Activated B cell treated with CpG ODN at 0.5 μM for 24 hours (primary cell): ENCODE measurements at regions of chr12 and their contacts with region 1.

Region 1: DNA sequence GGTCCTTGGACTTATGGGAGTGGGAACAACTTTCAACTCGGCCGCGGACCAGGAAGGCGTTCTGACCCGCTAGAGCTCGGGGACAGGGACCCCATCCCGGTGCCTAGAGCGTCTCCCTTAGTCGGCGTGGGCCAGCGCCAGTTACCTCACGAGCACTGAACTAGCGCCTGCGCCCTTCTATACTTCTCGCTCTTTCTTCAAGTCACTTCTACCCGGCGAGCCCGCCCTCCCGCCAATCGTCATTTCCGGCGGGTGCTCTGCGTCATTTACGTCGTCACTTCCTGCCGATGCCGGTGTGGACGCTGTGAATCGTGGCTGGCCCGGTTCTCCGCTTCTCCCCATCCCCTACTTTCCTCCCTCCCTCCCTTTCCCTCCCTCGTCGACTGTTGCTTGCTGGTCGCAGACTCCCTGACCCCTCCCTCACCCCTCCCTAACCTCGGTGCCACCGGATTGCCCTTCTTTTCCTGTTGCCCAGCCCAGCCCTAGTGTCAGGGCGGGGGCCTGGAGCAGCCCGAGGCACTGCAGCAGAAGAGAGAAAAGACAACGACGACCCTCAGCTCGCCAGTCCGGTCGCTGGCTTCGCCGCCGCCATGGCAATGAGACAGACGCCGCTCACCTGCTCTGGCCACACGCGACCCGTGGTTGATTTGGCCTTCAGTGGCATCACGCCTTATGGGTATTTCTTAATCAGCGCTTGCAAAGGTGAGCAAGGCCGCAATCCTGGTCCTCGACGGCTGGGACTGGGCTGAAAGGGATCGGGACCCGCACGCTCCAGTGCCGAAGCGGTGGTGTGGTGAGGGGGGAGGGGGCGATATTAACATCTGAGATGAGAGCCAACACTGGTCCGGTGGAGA is at the start of gene STRAP:
- DNase-seq: peak; percentile 95
- ATAC-seq: peak; percentile 94
- H3K4me3 Mint-ChIP-seq: peak within 1 kb of the TSS; percentile 99
- H3K27ac Mint-ChIP-seq: peak within 1 kb of the TSS; percentile 99
- H3K4me1 Mint-ChIP-seq: peaks cover 53% of the 10 kb centered on the region
- H3K27me3 Mint-ChIP-seq: no peaks in the 10 kb centered on the region
- CTCF ChIP-seq: no peak
- total RNA-seq, gene STRAP: 78.1 and 82.3 TPM in 2 replicates

Region 2: DNA sequence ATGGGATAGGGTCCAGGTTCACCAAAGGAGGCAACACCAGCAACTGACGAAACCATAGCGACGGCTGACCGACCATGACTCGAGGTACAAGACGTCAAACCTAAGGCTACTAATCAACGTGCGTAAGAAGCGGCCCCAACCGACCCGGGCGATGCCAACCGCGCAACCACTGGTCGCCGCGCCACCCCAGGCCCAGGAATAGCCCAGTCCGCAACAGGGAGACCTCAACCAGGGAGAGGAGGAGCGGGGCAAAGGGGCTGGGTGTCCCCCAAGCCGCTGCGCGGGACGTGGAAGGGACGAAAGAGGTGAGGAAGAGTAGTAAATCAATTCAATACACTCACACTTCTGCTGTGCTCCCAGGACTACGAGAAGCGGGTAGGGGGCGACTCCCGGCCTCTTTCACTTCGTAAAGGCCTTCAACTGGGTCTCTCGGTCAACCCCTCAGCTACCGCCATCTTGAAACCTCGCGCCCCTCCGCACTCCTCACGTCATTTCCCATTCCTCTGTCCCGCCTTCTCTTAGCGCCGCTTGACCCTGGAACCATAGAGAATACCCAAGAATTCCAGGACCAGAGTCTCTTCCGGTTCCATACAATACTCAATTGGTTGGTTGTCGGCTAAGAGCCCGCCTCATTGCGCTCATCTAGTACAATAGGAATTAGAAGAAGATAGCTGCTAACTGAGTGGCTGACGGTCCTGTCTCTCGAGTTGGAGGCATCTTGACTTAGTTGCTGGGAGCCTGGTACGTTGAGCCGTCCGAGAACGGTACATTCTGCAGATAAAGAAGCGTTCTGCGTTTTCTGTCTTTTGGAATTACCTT is 1079.1 kb before region 1 on chr12 and contains the starts of genes C12orf60 and WBP11:
- CTCF ChIA-PET with region 1: no interaction called
- POLR2A ChIA-PET with region 1: no interaction called
- intact Hi-C with region 1: loop called (anchors 1 kb)
- DNase-seq: peak; percentile 74
- ATAC-seq: peak; percentile 95
- H3K4me3 Mint-ChIP-seq: no peak within 1 kb of the TSS
- H3K27ac Mint-ChIP-seq: no peak within 1 kb of the TSS
- H3K4me1 Mint-ChIP-seq: peaks cover 17% of the 10 kb centered on the region
- H3K27me3 Mint-ChIP-seq: no peaks in the 10 kb centered on the region
- CTCF ChIP-seq: no peak
- total RNA-seq, gene C12orf60: 0.64 and 0.69 TPM in 2 replicates
- total RNA-seq, gene WBP11: 86.3 and 89.4 TPM in 2 replicates

Region 3: GRCh38 chr12:15546102-15546701 is 336.1 kb before region 1 on chr12:
- CTCF ChIA-PET with region 1: no interaction called
- POLR2A ChIA-PET with region 1: interaction called, 7 read pairs
- intact Hi-C with region 1: loop called (anchors 5 kb)
- DNase-seq: no peak
- ATAC-seq: peak; percentile 76
- H3K4me3 Mint-ChIP-seq: peak overlapping the region; percentile 87
- H3K27ac Mint-ChIP-seq: peak overlapping the region; percentile 99
- H3K4me1 Mint-ChIP-seq: peaks cover 60% of the 10 kb centered on the region
- H3K27me3 Mint-ChIP-seq: no peaks in the 10 kb centered on the region
- CTCF ChIP-seq: no peak

Region 4: GRCh38 chr12:15789220-15790171 is 92.8 kb before region 1 on chr12 and contains the start of gene EPS8:
- CTCF ChIA-PET with region 1: no interaction called
- POLR2A ChIA-PET with region 1: no interaction called
- intact Hi-C with region 1: loop called (anchors 2 kb)
- DNase-seq: peak; percentile 91
- ATAC-seq: peak; percentile 96
- H3K4me3 Mint-ChIP-seq: peak within 1 kb of the TSS; percentile 91
- H3K27ac Mint-ChIP-seq: peak within 1 kb of the TSS; percentile 46
- H3K4me1 Mint-ChIP-seq: peaks cover 14% of the 10 kb centered on the region
- H3K27me3 Mint-ChIP-seq: peaks cover 47% of the 10 kb centered on the region
- CTCF ChIP-seq: no peak
- total RNA-seq, gene EPS8: 0.73 and 0.89 TPM in 2 replicates

Region 5: DNA sequence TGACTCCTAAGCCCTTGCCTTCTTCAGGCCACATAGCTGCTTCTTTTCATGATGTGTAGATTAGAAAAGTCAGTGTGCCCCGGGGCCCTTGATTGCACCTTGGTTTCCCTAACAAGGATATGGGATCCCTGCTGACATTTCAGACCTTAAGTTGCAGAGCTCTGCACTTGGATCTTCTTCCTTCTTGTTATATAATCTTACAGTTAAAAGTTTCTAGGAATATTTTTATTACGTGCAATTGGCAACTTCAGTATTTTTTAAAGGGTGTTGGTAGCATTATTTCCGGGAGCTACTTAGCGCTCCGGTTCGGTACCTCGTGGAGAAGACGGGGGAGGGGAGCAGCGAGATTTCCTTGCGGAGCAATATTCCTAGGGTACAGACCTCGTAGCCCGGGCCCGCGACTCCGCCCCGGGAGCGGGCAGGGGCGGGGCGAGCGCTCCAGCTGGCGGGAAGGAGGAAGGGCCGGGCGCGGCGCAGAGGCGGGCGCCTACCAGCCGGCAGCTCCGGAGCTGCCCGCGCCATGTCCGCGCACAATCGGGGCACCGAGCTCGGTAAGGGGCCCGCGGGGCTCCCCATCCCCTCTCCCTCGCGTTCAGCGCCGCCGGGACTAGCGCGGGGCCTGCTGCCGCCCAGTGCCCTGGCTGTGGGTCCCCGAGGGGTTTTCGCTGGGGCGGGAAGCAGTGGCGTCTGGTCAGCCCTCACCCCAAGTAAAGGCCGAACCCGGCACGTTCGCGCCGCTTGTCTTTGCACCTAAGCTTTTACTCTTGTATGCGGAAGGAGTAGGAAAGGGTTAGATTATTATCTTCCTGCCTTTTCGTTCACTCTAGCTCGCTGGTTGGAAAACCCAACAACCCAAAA is 28.7 kb after region 1 on chr12 and contains the start of gene DERA:
- CTCF ChIA-PET with region 1: no interaction called
- POLR2A ChIA-PET with region 1: interaction called, 19 read pairs
- intact Hi-C with region 1: loop called (anchors 1 kb)
- DNase-seq: peak; percentile 69
- ATAC-seq: peak; percentile 96
- H3K4me3 Mint-ChIP-seq: peak within 1 kb of the TSS; percentile 86
- H3K27ac Mint-ChIP-seq: peak within 1 kb of the TSS; percentile 83
- H3K4me1 Mint-ChIP-seq: peaks cover 20% of the 10 kb centered on the region
- H3K27me3 Mint-ChIP-seq: no peaks in the 10 kb centered on the region
- CTCF ChIP-seq: no peak
- total RNA-seq, gene DERA: 21.2 and 22.1 TPM in 2 replicates

Region 6: DNA sequence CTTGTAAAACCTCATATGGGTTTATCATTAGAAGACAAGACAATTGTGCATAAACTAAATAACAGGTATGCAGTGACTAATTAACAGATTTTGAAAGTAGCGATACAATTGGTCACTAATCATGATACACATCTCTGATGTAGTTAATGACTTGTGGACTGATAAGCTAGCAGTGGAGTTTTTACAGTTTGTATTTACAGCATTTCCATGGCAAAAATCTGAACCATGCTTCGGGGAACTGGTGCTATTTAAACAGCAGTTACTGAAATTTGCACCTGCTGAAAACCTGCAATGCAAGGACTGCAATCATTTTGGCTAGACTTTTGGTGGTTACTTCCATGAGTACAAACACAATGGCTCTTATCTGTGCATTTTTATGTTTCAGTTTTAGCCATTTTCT is 1736.5 kb after region 1 on chr12:
- CTCF ChIA-PET with region 1: no interaction called
- POLR2A ChIA-PET with region 1: no interaction called
- intact Hi-C with region 1: no loop called
- DNase-seq: no peak
- ATAC-seq: no peak
- H3K4me3 Mint-ChIP-seq: no peak overlapping the region
- H3K27ac Mint-ChIP-seq: no peak overlapping the region
- H3K4me1 Mint-ChIP-seq: no peaks in the 10 kb centered on the region
- H3K27me3 Mint-ChIP-seq: no peaks in the 10 kb centered on the region
- CTCF ChIP-seq: no peak